AG04450 (cell line): ENCODE measurements at regions of chr15 and their contacts with region 1.

Region 1: DNA sequence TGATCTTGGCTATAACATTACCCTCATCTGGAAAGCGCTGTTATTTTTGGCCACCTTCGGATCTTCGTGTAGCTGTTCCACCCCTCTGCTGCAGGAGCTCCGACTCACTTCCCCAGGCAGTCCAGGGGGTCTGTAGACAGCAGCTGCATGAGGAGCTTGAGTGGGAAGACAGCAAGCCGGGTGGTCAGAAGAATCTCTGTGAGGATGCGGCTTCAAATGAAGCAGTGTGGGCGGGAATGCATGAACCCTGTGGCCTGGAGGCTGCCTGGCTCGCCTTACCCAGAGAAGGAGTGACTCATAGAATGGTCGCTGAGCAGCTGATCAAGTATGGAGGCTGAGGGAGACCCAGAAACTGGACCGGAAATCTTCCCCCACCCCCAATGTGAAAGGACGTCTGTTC is 45.2 kb upstream of the NR2F2 start:
- DNase-seq: peak; percentile 97
- H3K4me3 ChIP-seq: peak overlapping the region; percentile 38
- H3K27ac ChIP-seq: peak overlapping the region; percentile 91
- H3K27me3 ChIP-seq: no peaks in the 10 kb centered on the region
- CTCF ChIP-seq: no peak

Region 2: DNA sequence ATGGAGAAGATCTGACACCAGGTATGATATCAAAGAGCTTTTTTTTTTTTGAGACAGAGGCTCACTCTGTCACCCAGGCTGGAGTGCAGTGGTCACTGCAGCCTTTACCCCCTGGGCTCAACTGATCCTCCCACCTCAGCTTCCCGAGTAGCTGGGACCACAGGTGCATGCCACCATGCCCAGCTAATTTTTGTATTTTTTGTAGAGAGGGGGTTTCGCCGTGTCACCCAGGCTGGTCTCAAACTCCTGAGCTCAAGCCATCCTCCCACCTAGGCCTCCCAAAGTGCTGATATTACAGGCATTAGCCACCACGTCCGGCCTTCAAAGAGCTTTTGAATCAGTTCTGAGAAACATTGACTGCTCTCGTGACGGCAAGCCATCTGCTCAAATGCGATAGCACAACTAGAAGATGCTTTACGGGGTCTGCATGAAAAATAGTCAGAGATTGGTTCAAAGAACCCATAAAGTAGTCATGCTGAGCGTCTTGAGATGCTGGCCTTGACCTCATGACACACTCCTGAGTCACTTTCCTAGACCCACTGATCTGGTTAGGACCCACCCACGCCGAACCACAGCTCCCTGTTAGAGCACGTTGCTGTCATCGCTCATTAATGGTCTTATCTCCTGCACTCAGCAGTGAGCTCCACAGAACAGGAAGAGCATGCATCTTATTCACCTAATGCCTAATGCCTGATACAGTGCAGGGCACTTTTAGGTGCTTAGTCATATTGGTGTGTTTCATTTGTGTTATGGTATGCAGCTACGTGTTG is 11.8 kb before region 1 on chr15:
- CTCF ChIA-PET with region 1: no interaction called
- POLR2A ChIA-PET with region 1: interaction called, 15 read pairs
- DNase-seq: peak; percentile 95
- H3K4me3 ChIP-seq: no peak overlapping the region; the same call in 1 of the 2 replicates
- H3K27ac ChIP-seq: peak overlapping the region; percentile 85
- H3K27me3 ChIP-seq: no peaks in the 10 kb centered on the region
- CTCF ChIP-seq: no peak

Region 3: DNA sequence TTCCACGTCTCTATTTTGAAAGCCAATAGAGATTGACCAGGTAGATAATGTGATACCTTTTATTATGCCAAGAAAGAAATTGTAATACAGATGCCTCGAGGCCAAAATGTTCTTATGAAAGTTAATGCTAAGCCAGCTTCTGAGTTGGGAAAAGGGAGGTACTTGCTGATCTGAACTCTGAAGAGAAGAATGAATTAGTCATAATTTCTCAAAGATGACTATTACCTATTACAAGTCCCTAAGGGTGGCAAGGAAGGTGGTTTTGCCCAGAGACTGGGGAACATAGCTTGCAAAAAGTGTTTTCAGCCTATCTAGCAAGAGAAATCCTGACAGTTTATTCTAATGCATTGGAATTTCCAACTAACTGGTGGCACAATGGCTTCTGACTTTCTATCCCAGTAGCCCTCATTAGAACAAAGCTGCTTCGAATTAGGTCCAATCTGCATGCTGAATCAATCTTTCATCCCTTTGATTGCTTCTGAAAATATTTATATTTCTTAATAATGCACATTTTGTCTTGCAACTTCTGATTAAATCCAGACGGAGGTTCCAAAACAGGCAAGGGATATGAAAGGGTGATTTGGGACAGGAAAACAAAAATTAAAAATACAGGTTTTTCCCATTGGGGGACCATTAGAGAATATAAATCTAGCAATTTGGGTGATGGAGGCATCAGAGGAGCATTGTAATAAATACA is 27.5 kb after region 1 on chr15:
- CTCF ChIA-PET with region 1: no interaction called
- POLR2A ChIA-PET with region 1: no interaction called
- DNase-seq: no peak
- H3K4me3 ChIP-seq: no peak overlapping the region
- H3K27ac ChIP-seq: no peak overlapping the region
- H3K27me3 ChIP-seq: no peaks in the 10 kb centered on the region
- CTCF ChIP-seq: no peak